ENCODE measurements at regions of chr4 and their contacts with region 1.

Region 1: GRCh38 chr4:100421361-100421978 is 96.4 kb downstream of the EMCN start:
- DNase-seq: no peak
- H3K4me3 Mint-ChIP-seq: no peak overlapping the region
- H3K27ac Mint-ChIP-seq: no peak overlapping the region
- H3K4me1 Mint-ChIP-seq: peaks cover 17% of the 10 kb centered on the region
- H3K27me3 Mint-ChIP-seq: no peaks in the 10 kb centered on the region
- CTCF ChIP-seq: no peak

Region 2: GRCh38 chr4:100106982-100107381 is 314.5 kb before region 1 on chr4:
- CTCF ChIA-PET with region 1: no interaction called
- intact Hi-C with region 1: no loop called
- DNase-seq: no peak
- H3K4me3 Mint-ChIP-seq: no peak overlapping the region
- H3K27ac Mint-ChIP-seq: no peak overlapping the region
- H3K4me1 Mint-ChIP-seq: no peaks in the 10 kb centered on the region
- H3K27me3 Mint-ChIP-seq: no peaks in the 10 kb centered on the region
- CTCF ChIP-seq: no peak

Region 3: GRCh38 chr4:100450449-100450848 is 29.0 kb after region 1 on chr4:
- CTCF ChIA-PET with region 1: no interaction called
- intact Hi-C with region 1: loop called (anchors 1 kb)
- DNase-seq: no peak
- H3K4me3 Mint-ChIP-seq: no peak overlapping the region
- H3K27ac Mint-ChIP-seq: no peak overlapping the region
- H3K4me1 Mint-ChIP-seq: no peaks in the 10 kb centered on the region
- H3K27me3 Mint-ChIP-seq: no peaks in the 10 kb centered on the region
- CTCF ChIP-seq: no peak

Region 4: DNA sequence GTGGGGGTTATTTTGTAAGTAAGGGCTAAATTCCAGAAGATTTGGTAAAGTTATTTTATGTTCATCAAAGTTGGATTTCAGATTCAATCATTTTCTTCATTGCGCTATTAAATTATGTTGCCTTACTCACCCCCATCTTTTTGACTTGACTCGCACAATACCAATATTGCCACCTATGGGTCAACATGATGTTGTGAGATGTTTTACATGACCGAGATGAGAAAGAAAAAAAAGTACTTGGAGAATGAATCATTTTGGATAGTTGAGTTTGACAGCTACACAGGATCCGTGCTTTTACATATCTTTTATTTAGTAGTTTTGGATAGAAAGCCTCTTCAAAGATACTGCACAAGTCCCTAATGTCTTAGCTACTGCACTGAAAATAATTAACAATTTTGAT is 320.6 kb after region 1 on chr4:
- CTCF ChIA-PET with region 1: interaction called, 3 read pairs
- intact Hi-C with region 1: loop called (anchors 1 kb)
- DNase-seq: peak; percentile 8
- H3K4me3 Mint-ChIP-seq: no peak overlapping the region
- H3K27ac Mint-ChIP-seq: no peak overlapping the region
- H3K4me1 Mint-ChIP-seq: peaks cover 23% of the 10 kb centered on the region
- H3K27me3 Mint-ChIP-seq: no peaks in the 10 kb centered on the region
- CTCF ChIP-seq: no peak

Region 5: DNA sequence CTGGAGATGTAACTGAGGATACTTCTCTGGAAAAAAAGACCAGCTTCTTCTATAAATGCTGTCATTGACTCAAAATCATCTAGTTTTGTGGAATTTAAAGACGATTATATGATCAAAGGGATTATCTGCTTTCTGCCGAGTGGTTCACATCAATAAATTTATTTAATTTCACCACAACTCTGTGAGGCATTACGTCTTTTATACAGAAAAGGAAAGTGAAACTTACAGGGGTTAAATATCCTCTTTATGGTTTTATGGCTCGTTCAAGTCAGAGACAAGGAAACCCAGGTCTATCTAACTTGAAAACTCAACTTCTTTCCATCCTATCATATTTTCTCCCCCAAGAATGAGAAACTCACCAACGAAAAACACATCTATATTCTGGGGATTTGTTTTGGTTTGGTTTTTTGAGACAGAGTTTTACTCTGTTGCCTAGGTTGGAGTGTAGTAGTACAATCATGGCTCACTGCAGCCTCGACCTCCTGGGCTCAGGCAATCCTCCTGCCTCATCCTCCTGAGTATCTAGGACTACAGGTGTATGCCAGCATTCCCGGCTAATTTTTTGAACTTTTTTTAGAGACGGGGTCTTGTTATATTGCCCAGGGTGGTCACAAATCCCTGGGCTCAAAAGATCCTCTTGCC is 474.2 kb after region 1 on chr4:
- CTCF ChIA-PET with region 1: no interaction called
- intact Hi-C with region 1: loop called (anchors 10 kb)
- DNase-seq: no peak
- H3K4me3 Mint-ChIP-seq: peak overlapping the region; percentile 44
- H3K27ac Mint-ChIP-seq: peak overlapping the region; percentile 23
- H3K4me1 Mint-ChIP-seq: no peaks in the 10 kb centered on the region
- H3K27me3 Mint-ChIP-seq: no peaks in the 10 kb centered on the region
- CTCF ChIP-seq: no peak